Heart left ventricle (tissue), 16 donors: ENCODE measurements at regions of chr15 and their contacts with region 1.

Region 1: GRCh38 chr15:81480645-81481053 is 106.6 kb upstream of the TMC3 start:
- DNase-seq: peak in 3 of 5 donors; percentile 23 to 32 (median 26)
- ATAC-seq: peak; percentile 42 to 65 (median 62)
- H3K4me3 ChIP-seq: peak overlapping the region in 1 of 12 donors; percentile 7
- H3K27ac ChIP-seq: no peak overlapping the region
- H3K4me1 ChIP-seq: no peaks in the 10 kb centered on the region
- H3K27me3 ChIP-seq: no peaks in the 10 kb centered on the region
- CTCF ChIP-seq: peak; percentile 79 to 99 (median 87)
- POLR2A ChIP-seq: no peak

Region 2: DNA sequence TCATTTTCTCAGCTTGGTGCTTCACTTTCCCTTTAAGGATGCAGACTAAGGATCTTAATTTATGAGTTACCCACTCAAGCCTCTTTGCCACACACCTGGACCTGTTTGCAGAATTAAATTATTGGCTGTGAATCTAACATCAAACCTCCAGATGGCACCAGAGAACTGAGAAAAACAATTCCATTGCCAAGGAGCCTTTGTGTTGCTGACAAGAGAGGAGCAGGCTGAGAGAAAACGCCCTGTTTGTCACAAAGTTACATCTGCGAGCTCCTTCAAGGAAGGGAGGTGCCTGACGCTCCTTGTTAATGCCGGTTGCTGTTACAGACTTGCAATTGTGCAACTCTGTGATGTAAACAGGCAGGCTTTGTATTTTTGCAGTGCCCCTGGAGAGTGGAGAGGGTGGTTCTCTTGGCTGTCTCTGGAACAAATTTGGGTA is 70.3 kb before region 1 on chr15:
- intact Hi-C with region 1: loop called in 1 of 10 experiments (anchors 5 kb)
- DNase-seq: peak in 4 of 5 donors; percentile 18 to 66 (median 44)
- ATAC-seq: peak; percentile 73 to 92 (median 89)
- H3K4me3 ChIP-seq: no peak overlapping the region
- H3K27ac ChIP-seq: no peak overlapping the region
- H3K4me1 ChIP-seq: peaks cover 0 to 10% (median 2%) of the 10 kb centered on the region in 12 donors
- H3K27me3 ChIP-seq: no peaks in the 10 kb centered on the region
- CTCF ChIP-seq: peak; percentile 29 to 61 (median 52)
- POLR2A ChIP-seq: no peak

Region 3: GRCh38 chr15:81813178-81813577 is 332.5 kb after region 1 on chr15:
- intact Hi-C with region 1: loop called in 1 of 10 experiments (anchors 10 kb)
- DNase-seq: no peak
- ATAC-seq: no peak
- H3K4me3 ChIP-seq: no peak overlapping the region
- H3K27ac ChIP-seq: no peak overlapping the region
- H3K4me1 ChIP-seq: peaks cover 0 to 11% (median 0%) of the 10 kb centered on the region in 12 donors
- H3K27me3 ChIP-seq: no peaks in the 10 kb centered on the region
- CTCF ChIP-seq: peak in 4 of 12 donors; percentile 8 to 39 (median 20)
- POLR2A ChIP-seq: no peak

Region 4: GRCh38 chr15:81939604-81940440 is 459.2 kb after region 1 on chr15:
- intact Hi-C with region 1: loop called in 6 of 10 experiments (anchors 2 to 10 kb)
- DNase-seq: no peak
- ATAC-seq: no peak
- H3K4me3 ChIP-seq: no peak overlapping the region
- H3K27ac ChIP-seq: no peak overlapping the region
- H3K4me1 ChIP-seq: peaks cover 0 to 2% (median 0%) of the 10 kb centered on the region in 12 donors
- H3K27me3 ChIP-seq: no peaks in the 10 kb centered on the region
- CTCF ChIP-seq: peak; percentile 21 to 62 (median 54)
- POLR2A ChIP-seq: no peak

Region 5: GRCh38 chr15:82103468-82103867 is 622.8 kb after region 1 on chr15:
- intact Hi-C with region 1: loop called in 1 of 10 experiments (anchors 2 kb)
- DNase-seq: no peak
- ATAC-seq: no peak
- H3K4me3 ChIP-seq: no peak overlapping the region
- H3K27ac ChIP-seq: no peak overlapping the region
- H3K4me1 ChIP-seq: no peaks in the 10 kb centered on the region
- H3K27me3 ChIP-seq: no peaks in the 10 kb centered on the region
- CTCF ChIP-seq: peak in 4 of 12 donors; percentile 7 to 27 (median 14)
- POLR2A ChIP-seq: no peak

Region 6: DNA sequence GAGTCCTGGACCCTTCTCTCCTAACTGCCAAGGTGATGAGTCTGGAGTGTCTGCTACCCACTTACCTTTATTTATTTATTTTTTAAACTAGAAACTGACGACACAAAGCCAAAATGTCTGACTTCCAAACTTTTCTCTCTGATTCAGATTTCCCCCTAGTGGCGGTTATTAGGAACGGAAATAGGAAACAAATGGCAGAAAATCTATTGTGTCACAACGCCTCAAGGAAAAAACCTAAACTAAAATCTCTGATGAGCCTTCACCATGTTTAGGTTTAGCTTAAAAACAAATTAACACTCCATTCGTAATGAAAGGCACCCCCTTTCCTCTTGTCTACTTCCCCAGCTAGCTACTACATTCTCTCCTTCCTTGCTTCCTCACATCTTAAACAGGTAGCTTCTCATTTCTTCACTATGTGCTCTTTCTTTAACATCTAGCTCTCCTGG is 659.2 kb after region 1 on chr15:
- intact Hi-C with region 1: loop called in 7 of 10 experiments (anchors 2 to 10 kb)
- DNase-seq: no peak
- ATAC-seq: no peak
- H3K4me3 ChIP-seq: no peak overlapping the region
- H3K27ac ChIP-seq: no peak overlapping the region
- H3K4me1 ChIP-seq: peaks cover 0 to 11% (median 0%) of the 10 kb centered on the region in 12 donors
- H3K27me3 ChIP-seq: no peaks in the 10 kb centered on the region
- CTCF ChIP-seq: peak; percentile 54 to 79 (median 70)
- POLR2A ChIP-seq: no peak